HepG2 (cell line): ENCODE measurements at regions of chr16 and their contacts with region 1.

Region 1: DNA sequence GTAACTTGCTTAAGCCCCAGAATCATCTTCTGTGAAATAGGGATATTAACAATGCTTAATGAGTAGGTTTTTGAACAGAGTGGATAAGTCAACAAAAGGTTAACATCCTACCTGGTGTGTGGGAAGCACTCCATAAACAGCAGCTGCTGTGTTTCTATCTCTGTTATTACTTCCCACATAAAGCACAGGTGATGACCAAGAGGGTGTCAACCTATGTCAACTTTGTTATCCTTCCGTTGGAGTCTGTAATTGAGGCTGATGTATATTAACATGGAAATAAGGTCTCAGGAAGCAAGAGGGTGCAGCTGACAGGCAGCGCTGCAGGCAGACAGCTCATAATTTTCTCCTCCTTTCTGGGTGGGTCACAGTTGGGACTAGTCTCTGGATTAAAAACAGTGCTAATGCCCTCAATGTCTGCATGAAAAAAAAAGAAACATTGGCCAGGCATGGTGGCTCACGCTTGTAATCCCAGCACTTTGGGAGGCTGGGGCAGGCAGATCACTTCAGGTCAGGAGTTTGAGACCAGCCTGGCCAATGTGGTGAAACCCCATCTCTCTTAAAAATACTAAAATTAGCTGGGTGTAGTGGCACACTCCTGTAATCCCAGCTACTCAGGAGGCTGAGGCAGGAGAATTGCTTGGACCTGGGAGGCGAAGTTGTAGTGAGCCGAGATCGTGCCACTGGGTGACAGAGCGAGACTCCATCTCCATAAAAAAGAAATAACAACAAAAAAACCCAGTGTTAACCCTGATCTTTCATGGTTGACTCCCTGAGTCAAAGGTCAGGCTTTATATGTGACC is 269.6 kb downstream of the SNX29 start:
- DNase-seq: no peak
- ATAC-seq: no peak
- H3K4me3 ChIP-seq: no peak overlapping the region
- H3K27ac ChIP-seq: no peak overlapping the region
- H3K4me1 ChIP-seq: 0 out of 2 replicates have a peak, but pooled peaks cover 8% of the 10 kb centered on the region
- H3K27me3 ChIP-seq: no peaks in the 10 kb centered on the region
- CTCF ChIP-seq: no peak
- EP300 ChIP-seq: no peak
- POLR2A ChIP-seq: no peak
- RAD21 ChIP-seq: no peak

Region 2: GRCh38 chr16:12168074-12169000 is 77.8 kb before region 1 on chr16:
- CTCF ChIA-PET with region 1: no interaction called
- POLR2A ChIA-PET with region 1: no interaction called
- in situ Hi-C with region 1: no loop called
- intact Hi-C with region 1: loop called (anchors 1 kb)
- DNase-seq: no peak
- ATAC-seq: no peak
- H3K4me3 ChIP-seq: no peak overlapping the region
- H3K27ac ChIP-seq: no peak overlapping the region
- H3K4me1 ChIP-seq: peaks cover 7% of the 10 kb centered on the region; the same call in 1 of the 2 replicates
- H3K27me3 ChIP-seq: no peaks in the 10 kb centered on the region
- CTCF ChIP-seq: no peak
- EP300 ChIP-seq: no peak
- POLR2A ChIP-seq: no peak
- RAD21 ChIP-seq: no peak

Region 3: GRCh38 chr16:12203780-12204351 is 42.3 kb before region 1 on chr16:
- CTCF ChIA-PET with region 1: no interaction called
- POLR2A ChIA-PET with region 1: no interaction called
- in situ Hi-C with region 1: no loop called
- intact Hi-C with region 1: no loop called
- DNase-seq: peak; percentile 39
- ATAC-seq: peak; percentile 90
- H3K4me3 ChIP-seq: peak overlapping the region in 1 of 3 experiments; percentile 42; a peak in 1 of 6 replicates
- H3K27ac ChIP-seq: peak overlapping the region; percentile 4
- H3K4me1 ChIP-seq: peaks cover 47% of the 10 kb centered on the region
- H3K27me3 ChIP-seq: no peaks in the 10 kb centered on the region
- CTCF ChIP-seq: no peak
- EP300 ChIP-seq: no peak
- POLR2A ChIP-seq: no peak
- RAD21 ChIP-seq: no peak